ENCODE measurements at regions of chr7 and their contacts with region 1.

Region 1: GRCh38 chr7:1432411-1433082 is 26.7 kb downstream of the MICALL2 start:
- DNase-seq: peak; percentile 82
- ATAC-seq: peak; percentile 92
- H3K4me3 ChIP-seq: no peak overlapping the region
- H3K4me3 Mint-ChIP-seq: no peak overlapping the region
- H3K27ac ChIP-seq: no peak overlapping the region
- H3K27ac Mint-ChIP-seq: no peak overlapping the region
- H3K4me1 ChIP-seq: peaks cover 0 to 8% of the 10 kb centered on the region in 2 donors
- H3K4me1 Mint-ChIP-seq: peaks cover 4% of the 10 kb centered on the region
- H3K27me3 ChIP-seq: peaks cover 0 to 19% (median 3%) of the 10 kb centered on the region in 4 experiments
- H3K27me3 Mint-ChIP-seq: peaks cover 12% of the 10 kb centered on the region
- CTCF ChIP-seq: peak; percentile 99

Region 2: GRCh38 chr7:1193593-1194424 is 238.7 kb before region 1 on chr7:
- CTCF ChIA-PET with region 1: no interaction called
- POLR2A ChIA-PET with region 1: no interaction called
- intact Hi-C with region 1: loop called (anchors 5 kb)
- DNase-seq: no peak
- ATAC-seq: no peak
- H3K4me3 ChIP-seq: no peak overlapping the region
- H3K4me3 Mint-ChIP-seq: no peak overlapping the region
- H3K27ac ChIP-seq: no peak overlapping the region
- H3K27ac Mint-ChIP-seq: no peak overlapping the region
- H3K4me1 ChIP-seq: no peaks in the 10 kb centered on the region
- H3K4me1 Mint-ChIP-seq: peaks cover 1% of the 10 kb centered on the region
- H3K27me3 ChIP-seq: peaks cover 0 to 26% (median 3%) of the 10 kb centered on the region in 4 experiments
- H3K27me3 Mint-ChIP-seq: peaks cover 22% of the 10 kb centered on the region
- CTCF ChIP-seq: no peak

Region 3: DNA sequence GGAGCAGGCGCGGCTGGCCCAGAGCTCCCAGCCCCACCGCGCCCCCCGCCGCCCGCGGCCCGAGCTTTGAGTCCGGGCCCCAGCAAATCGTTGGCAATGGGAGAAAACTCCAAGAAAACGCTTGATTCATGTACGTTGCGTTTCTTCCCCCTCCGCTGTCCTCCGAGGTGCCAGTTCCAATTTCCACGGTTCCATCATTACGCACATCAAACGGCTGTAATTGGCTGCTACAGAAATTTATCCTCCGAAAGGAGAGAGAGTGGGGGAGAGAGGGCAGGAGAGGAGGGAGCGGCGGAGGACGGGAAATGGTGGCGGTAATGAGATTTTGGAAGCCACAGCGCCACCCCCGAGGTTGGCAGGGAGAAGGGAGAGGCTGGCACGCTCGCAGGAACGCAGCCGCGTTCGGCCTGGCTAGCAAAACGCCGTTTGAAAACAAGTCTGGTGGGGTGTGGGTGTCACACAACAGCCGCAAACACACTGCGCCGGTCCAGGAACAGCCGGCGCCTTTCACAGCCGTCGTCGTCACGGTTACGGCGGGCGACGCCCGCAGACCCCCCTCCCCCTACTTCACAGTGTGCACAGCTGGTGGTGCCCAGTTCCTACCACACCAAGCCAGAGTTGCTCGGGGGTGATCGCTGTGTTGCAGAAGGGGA is 142.4 kb before region 1 on chr7:
- CTCF ChIA-PET with region 1: no interaction called
- POLR2A ChIA-PET with region 1: no interaction called
- intact Hi-C with region 1: no loop called
- DNase-seq: no peak
- ATAC-seq: no peak
- H3K4me3 ChIP-seq: peak overlapping the region in 4 of 5 experiments; percentile 11 to 41 (median 28)
- H3K4me3 Mint-ChIP-seq: peak overlapping the region; percentile 68
- H3K27ac ChIP-seq: no peak overlapping the region
- H3K27ac Mint-ChIP-seq: no peak overlapping the region
- H3K4me1 ChIP-seq: peaks cover 6 to 11% of the 10 kb centered on the region in 2 donors
- H3K4me1 Mint-ChIP-seq: peaks cover 10% of the 10 kb centered on the region
- H3K27me3 ChIP-seq: peaks cover 0 to 26% (median 6%) of the 10 kb centered on the region in 4 experiments
- H3K27me3 Mint-ChIP-seq: peaks cover 19% of the 10 kb centered on the region
- CTCF ChIP-seq: no peak

Region 4: GRCh38 chr7:1473864-1474512 is 41.4 kb after region 1 on chr7:
- CTCF ChIA-PET with region 1: interaction called, 5 read pairs
- POLR2A ChIA-PET with region 1: no interaction called
- intact Hi-C with region 1: loop called (anchors 1 kb)
- DNase-seq: peak; percentile 81
- ATAC-seq: peak; percentile 70
- H3K4me3 ChIP-seq: no peak overlapping the region
- H3K4me3 Mint-ChIP-seq: no peak overlapping the region
- H3K27ac ChIP-seq: no peak overlapping the region
- H3K27ac Mint-ChIP-seq: no peak overlapping the region
- H3K4me1 ChIP-seq: no peaks in the 10 kb centered on the region
- H3K4me1 Mint-ChIP-seq: no peaks in the 10 kb centered on the region
- H3K27me3 ChIP-seq: no peaks in the 10 kb centered on the region
- H3K27me3 Mint-ChIP-seq: no peaks in the 10 kb centered on the region
- CTCF ChIP-seq: peak; percentile 93

Region 5: GRCh38 chr7:1638215-1638661 is 205.7 kb after region 1 on chr7:
- CTCF ChIA-PET with region 1: no interaction called
- POLR2A ChIA-PET with region 1: no interaction called
- intact Hi-C with region 1: no loop called
- DNase-seq: no peak
- ATAC-seq: no peak
- H3K4me3 ChIP-seq: no peak overlapping the region
- H3K4me3 Mint-ChIP-seq: no peak overlapping the region
- H3K27ac ChIP-seq: no peak overlapping the region
- H3K27ac Mint-ChIP-seq: no peak overlapping the region
- H3K4me1 ChIP-seq: no peaks in the 10 kb centered on the region
- H3K4me1 Mint-ChIP-seq: no peaks in the 10 kb centered on the region
- H3K27me3 ChIP-seq: peaks cover 0 to 7% (median 0%) of the 10 kb centered on the region in 4 experiments
- H3K27me3 Mint-ChIP-seq: peaks cover 9% of the 10 kb centered on the region
- CTCF ChIP-seq: no peak